ENCODE measurements at regions of chr16 and their contacts with region 1.

Region 1: GRCh38 chr16:85717393-85718121 is 28.8 kb upstream of the GINS2 start:
- DNase-seq: peak in 1 of 2 donors; percentile 70
- H3K4me3 ChIP-seq: no peak overlapping the region
- H3K27ac ChIP-seq: no peak overlapping the region
- H3K4me1 ChIP-seq: no peaks in the 10 kb centered on the region
- H3K27me3 ChIP-seq: no peaks in the 10 kb centered on the region
- CTCF ChIP-seq: peak; percentile 62 to 84 (median 70)

Region 2: DNA sequence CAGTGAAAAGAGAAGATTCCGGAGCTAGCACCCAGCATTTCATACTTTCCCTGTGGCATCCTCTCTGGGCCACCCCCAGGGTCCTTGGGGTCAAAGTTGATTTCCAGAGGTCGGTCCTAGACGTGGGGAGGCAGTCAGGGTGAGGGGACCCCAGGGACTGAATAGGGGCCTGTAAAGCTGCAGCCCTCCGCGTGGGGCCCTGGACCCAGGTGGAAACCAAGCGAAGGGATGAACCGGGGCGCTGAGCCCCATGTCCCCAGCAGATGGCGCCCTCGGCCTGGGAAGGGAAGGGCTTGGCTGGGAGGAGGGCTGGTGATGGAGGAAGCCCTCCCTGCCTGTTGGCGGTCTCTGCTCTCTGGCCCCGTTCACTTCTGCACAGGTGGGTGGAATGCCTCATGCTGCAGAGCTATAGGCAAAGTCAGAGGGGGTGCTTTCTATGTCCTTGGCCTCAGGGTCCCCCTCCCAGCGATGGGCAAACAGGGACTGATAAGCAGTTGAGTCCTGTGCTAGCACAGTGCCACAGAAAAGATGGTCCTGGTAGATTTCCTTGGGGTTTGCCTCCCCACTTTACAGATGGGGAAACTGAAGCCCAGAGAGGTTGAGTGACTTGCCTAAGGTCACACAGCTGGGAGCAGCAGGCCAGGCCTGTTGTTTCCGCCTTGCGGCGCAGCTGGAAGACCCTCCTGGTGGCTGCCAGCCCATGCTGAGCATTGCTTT is 441.9 kb before region 1 on chr16:
- intact Hi-C with region 1: loop called (anchors 2 kb)
- DNase-seq: peak in 1 of 2 donors; percentile 75
- H3K4me3 ChIP-seq: no peak overlapping the region
- H3K27ac ChIP-seq: no peak overlapping the region
- H3K4me1 ChIP-seq: no peaks in the 10 kb centered on the region
- H3K27me3 ChIP-seq: no peaks in the 10 kb centered on the region
- CTCF ChIP-seq: peak; percentile 82 to 93 (median 92)

Region 3: GRCh38 chr16:85305996-85306792 is 411.4 kb before region 1 on chr16:
- intact Hi-C with region 1: loop called (anchors 2 kb)
- DNase-seq: peak; percentile 87 to 96
- H3K4me3 ChIP-seq: no peak overlapping the region
- H3K27ac ChIP-seq: peak overlapping the region; percentile 27 to 49
- H3K4me1 ChIP-seq: peaks cover 3 to 29% of the 10 kb centered on the region in 2 donors
- H3K27me3 ChIP-seq: no peaks in the 10 kb centered on the region
- CTCF ChIP-seq: no peak

Region 4: DNA sequence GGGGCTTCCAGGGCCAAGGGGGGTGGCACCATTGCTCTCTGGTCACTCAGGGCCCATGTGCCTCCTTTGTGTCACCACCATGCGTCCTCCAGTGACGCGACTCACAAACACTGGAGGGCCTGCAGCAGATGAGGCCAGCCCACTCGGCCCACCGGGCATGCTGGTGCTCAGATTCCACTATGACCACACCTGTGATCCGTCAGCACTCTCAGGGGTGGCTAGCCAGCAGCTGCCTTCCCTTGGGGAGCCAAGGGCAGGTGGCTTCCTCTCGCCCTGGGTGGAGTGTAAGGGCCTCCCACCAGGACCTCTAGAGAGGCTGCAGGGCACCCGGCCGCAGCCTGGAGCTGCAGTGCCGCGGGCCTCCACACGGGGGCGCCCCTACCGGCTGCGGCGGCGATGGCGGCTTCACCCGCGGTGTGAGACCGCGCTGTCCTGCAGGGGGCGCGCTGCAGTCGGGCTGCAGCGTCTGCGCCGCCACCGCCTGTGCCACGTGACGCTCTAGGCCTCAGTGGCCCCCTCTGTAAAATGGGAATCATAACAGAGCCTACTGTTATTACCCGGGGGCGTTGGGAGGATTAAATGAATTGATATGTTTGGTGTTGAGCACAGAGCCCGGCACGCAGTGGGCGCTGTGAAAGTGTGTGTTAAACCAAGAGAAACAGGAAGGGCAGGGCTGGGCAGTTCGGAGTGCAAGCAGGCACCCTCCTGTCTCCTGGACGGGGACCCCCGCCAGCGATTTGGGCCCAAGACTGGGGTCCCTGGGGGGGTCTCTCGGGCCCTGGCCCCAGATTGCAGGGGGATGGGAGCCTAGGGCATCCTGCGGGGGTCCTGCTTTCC is 296.8 kb before region 1 on chr16:
- intact Hi-C with region 1: loop called (anchors 10 kb)
- DNase-seq: no peak
- H3K4me3 ChIP-seq: no peak overlapping the region
- H3K27ac ChIP-seq: no peak overlapping the region
- H3K4me1 ChIP-seq: peaks cover 0 to 3% of the 10 kb centered on the region in 2 donors
- H3K27me3 ChIP-seq: no peaks in the 10 kb centered on the region
- CTCF ChIP-seq: peak; percentile 99 to 100 (median 100)

Region 5: DNA sequence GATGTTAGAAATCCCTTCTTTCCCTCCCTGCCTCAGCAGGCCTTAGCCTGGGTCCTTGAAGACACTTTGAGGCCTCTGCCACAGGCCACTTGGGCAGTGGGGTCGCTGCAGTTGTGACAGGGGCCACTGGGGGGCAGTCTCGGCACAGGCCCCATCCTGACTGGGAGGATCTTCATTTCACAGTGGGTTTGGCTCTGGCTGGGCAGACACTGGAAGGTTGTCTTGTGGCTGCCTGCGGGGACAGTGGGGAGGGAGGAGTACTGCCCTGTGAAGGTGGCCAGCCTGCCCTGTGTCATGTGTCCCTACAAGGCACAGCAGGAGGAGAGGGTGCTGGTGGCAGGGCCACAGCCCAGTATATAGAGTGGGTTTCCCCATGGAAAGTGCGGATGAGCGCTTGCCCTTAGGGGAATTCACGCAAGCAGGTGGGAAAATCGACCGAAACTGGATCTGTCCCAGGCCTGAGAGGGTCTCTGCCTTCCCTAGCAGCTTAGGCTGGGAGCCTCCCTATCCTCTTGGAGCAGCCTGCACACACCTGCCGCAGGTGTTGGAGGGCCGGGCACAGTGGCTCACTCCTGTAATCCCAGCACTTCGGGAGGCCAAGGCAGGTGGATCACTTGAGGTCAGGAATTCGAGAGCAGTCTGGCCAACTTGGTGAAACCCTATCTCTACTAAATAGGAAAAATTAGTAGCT is 57.6 kb before region 1 on chr16:
- intact Hi-C with region 1: no loop called
- DNase-seq: no peak
- H3K4me3 ChIP-seq: no peak overlapping the region
- H3K27ac ChIP-seq: no peak overlapping the region
- H3K4me1 ChIP-seq: no peaks in the 10 kb centered on the region
- H3K27me3 ChIP-seq: no peaks in the 10 kb centered on the region
- CTCF ChIP-seq: peak; percentile 36 to 71 (median 68)